ENCODE measurements at regions of chr2 and their contacts with region 1.

Region 1: DNA sequence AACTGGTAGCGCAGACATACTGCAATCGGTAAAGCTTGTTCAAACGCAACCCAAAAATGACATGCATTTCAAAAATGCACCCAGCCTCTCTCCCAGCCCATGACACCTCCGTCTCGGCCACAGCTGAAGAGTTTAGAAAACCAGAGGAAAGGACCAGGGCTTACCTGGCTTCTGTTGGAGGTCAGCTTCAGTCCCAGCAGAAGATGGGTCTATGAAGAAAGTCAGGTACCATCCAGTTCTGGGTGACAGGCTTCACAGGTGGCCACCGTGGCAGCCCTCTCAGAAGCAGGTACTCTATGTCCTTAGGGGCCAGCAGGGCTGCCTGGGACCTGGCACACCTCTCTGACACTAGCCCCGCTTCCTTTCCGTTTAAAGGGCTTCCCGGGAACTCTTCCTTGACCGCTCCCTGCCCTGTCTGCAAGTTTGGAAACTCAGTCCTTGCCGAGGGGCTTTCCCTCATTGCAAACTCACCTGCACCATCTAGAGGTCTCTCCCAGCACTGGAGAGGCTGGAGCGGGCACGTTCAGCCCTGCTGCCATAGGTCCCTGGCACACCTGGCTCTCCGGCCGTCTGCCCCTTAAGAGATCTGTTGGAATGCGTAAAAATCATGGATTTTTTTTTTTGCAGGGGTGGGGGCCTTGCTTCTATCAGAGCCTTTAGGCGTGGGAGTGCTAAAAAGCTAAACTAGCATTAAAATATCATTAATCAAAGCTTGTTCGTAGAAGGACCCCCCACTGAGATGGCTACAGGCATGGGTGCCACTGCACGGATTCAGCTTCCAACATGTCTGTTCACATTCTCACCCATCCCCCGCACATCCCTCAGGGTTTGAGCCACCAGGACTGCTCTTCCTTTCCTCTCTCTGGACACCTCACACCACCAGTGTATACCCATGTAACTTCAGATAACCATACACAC is at the start of gene EDAR:
- DNase-seq: peak in 4 of 5 donors; percentile 42 to 55 (median 48)
- H3K4me3 ChIP-seq: peak within 1 kb of the TSS; percentile 19 to 26
- H3K4me3 Mint-ChIP-seq: peak within 1 kb of the TSS; percentile 85 to 95 (median 88)
- H3K27ac ChIP-seq: no peak within 1 kb of the TSS
- H3K27ac Mint-ChIP-seq: peak within 1 kb of the TSS; percentile 16 to 90 (median 77)
- H3K4me1 ChIP-seq: peaks cover 29% of the 10 kb centered on the region
- H3K4me1 Mint-ChIP-seq: peaks cover 21 to 43% (median 33%) of the 10 kb centered on the region in 4 donors
- H3K27me3 ChIP-seq: no peaks in the 10 kb centered on the region
- H3K27me3 Mint-ChIP-seq: peaks cover 0 to 7% of the 10 kb centered on the region in 2 donors
- total RNA-seq, gene EDAR: 5.8 to 6.3 TPM

Region 2: GRCh38 chr2:108823281-108823680 is 165.8 kb before region 1 on chr2:
- CTCF ChIA-PET with region 1: no interaction called
- POLR2A ChIA-PET with region 1: no interaction called
- intact Hi-C with region 1: no loop called
- DNase-seq: no peak
- H3K4me3 ChIP-seq: no peak overlapping the region
- H3K4me3 Mint-ChIP-seq: no peak overlapping the region
- H3K27ac ChIP-seq: no peak overlapping the region
- H3K27ac Mint-ChIP-seq: no peak overlapping the region
- H3K4me1 ChIP-seq: no peaks in the 10 kb centered on the region
- H3K4me1 Mint-ChIP-seq: no peaks in the 10 kb centered on the region
- H3K27me3 ChIP-seq: no peaks in the 10 kb centered on the region
- H3K27me3 Mint-ChIP-seq: no peaks in the 10 kb centered on the region

Region 3: GRCh38 chr2:108855194-108855593 is 133.9 kb before region 1 on chr2:
- CTCF ChIA-PET with region 1: interaction called, 9 read pairs
- POLR2A ChIA-PET with region 1: no interaction called
- intact Hi-C with region 1: loop called (anchors 1 kb)
- DNase-seq: peak in 4 of 5 donors; percentile 26 to 38 (median 34)
- H3K4me3 ChIP-seq: no peak overlapping the region
- H3K4me3 Mint-ChIP-seq: no peak overlapping the region
- H3K27ac ChIP-seq: no peak overlapping the region
- H3K27ac Mint-ChIP-seq: peak overlapping the region in 1 of 7 donors; percentile 13
- H3K4me1 ChIP-seq: no peaks in the 10 kb centered on the region
- H3K4me1 Mint-ChIP-seq: peaks cover 0 to 2% (median 0%) of the 10 kb centered on the region in 4 donors
- H3K27me3 ChIP-seq: no peaks in the 10 kb centered on the region
- H3K27me3 Mint-ChIP-seq: no peaks in the 10 kb centered on the region

Region 4: GRCh38 chr2:108971661-108972566 is 17.1 kb before region 1 on chr2:
- CTCF ChIA-PET with region 1: interaction called, 32 read pairs
- POLR2A ChIA-PET with region 1: interaction called, 5 read pairs
- intact Hi-C with region 1: no loop called
- DNase-seq: no peak
- H3K4me3 ChIP-seq: no peak overlapping the region
- H3K4me3 Mint-ChIP-seq: peak overlapping the region in 5 of 8 donors; percentile 1 to 53 (median 34)
- H3K27ac ChIP-seq: no peak overlapping the region
- H3K27ac Mint-ChIP-seq: peak overlapping the region in 4 of 7 donors; percentile 13 to 55 (median 42)
- H3K4me1 ChIP-seq: peaks cover 26% of the 10 kb centered on the region
- H3K4me1 Mint-ChIP-seq: peaks cover 28 to 81% (median 58%) of the 10 kb centered on the region in 4 donors
- H3K27me3 ChIP-seq: no peaks in the 10 kb centered on the region
- H3K27me3 Mint-ChIP-seq: no peaks in the 10 kb centered on the region

Region 5: GRCh38 chr2:109005686-109006204 is 16.7 kb after region 1 on chr2:
- CTCF ChIA-PET with region 1: interaction called, 10 read pairs
- POLR2A ChIA-PET with region 1: no interaction called
- intact Hi-C with region 1: no loop called
- DNase-seq: no peak
- H3K4me3 ChIP-seq: no peak overlapping the region
- H3K4me3 Mint-ChIP-seq: no peak overlapping the region
- H3K27ac ChIP-seq: no peak overlapping the region
- H3K27ac Mint-ChIP-seq: no peak overlapping the region
- H3K4me1 ChIP-seq: peaks cover 8% of the 10 kb centered on the region
- H3K4me1 Mint-ChIP-seq: peaks cover 6 to 18% (median 8%) of the 10 kb centered on the region in 4 donors
- H3K27me3 ChIP-seq: no peaks in the 10 kb centered on the region
- H3K27me3 Mint-ChIP-seq: peaks cover 0 to 2% of the 10 kb centered on the region in 2 donors

Region 6: GRCh38 chr2:109057686-109058085 is 68.6 kb after region 1 on chr2:
- CTCF ChIA-PET with region 1: no interaction called
- POLR2A ChIA-PET with region 1: no interaction called
- intact Hi-C with region 1: no loop called
- DNase-seq: no peak
- H3K4me3 ChIP-seq: no peak overlapping the region
- H3K4me3 Mint-ChIP-seq: no peak overlapping the region
- H3K27ac ChIP-seq: no peak overlapping the region
- H3K27ac Mint-ChIP-seq: peak overlapping the region in 1 of 7 donors; percentile 3
- H3K4me1 ChIP-seq: no peaks in the 10 kb centered on the region
- H3K4me1 Mint-ChIP-seq: peaks cover 0 to 30% (median 4%) of the 10 kb centered on the region in 4 donors
- H3K27me3 ChIP-seq: no peaks in the 10 kb centered on the region
- H3K27me3 Mint-ChIP-seq: no peaks in the 10 kb centered on the region

Measured in CD4-positive, alpha-beta memory T cell (primary cell).